ENCODE measurements at regions of chr9 and their contacts with region 1.

Region 1: GRCh38 chr9:108239696-108240321 is 616.0 kb downstream of the ACTL7B start:
- DNase-seq: no peak
- H3K4me3 ChIP-seq: no peak overlapping the region
- CTCF ChIP-seq: no peak
- POLR2A ChIP-seq: no peak

Region 2: GRCh38 chr9:107624234-107624960 is 615.4 kb before region 1 on chr9:
- intact Hi-C with region 1: loop called (anchors 2 kb)
- DNase-seq: peak in 1 of 2 donors; percentile 88
- H3K4me3 ChIP-seq: no peak overlapping the region
- CTCF ChIP-seq: no peak
- POLR2A ChIP-seq: no peak

Measured in lower leg skin (tissue), 4 donors.